HepG2 (cell line): ENCODE measurements at regions of chr15 and their contacts with region 1.

Region 1: DNA sequence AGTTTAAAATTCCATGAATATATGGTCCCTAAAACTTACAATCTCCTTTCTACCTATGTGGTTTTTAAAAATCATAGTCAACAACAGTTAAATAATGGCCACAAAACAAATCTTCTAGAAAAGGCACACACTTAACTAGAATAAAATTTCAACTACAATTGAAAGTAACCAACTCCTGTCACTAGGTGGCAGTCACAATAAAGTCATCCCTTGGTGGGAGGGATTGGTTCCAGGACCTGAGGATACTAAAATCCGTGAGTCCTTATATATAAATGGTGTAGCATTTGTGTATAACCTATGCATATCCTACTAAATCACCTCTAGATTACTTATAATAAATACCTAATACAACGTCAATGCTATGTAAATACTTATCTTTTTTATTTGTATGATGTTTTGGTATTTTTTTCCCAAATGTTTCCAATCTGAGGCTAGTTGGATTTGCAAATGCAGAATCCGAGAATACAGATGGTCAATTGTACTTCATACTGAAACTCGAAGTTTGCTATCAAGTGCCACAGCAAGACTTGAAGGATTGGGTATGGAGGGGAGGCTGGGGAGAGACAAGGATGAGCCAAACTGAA is 172.6 kb downstream of the FMN1 start:
- DNase-seq: peak; percentile 22
- ATAC-seq: peak; percentile 57; the same call in 2 of the 3 replicates
- H3K4me3 ChIP-seq: no peak overlapping the region
- H3K27ac ChIP-seq: no peak overlapping the region
- H3K4me1 ChIP-seq: no peaks in the 10 kb centered on the region
- H3K27me3 ChIP-seq: no peaks in the 10 kb centered on the region
- CTCF ChIP-seq: peak; percentile 65
- EP300 ChIP-seq: no peak
- POLR2A ChIP-seq: no peak
- RAD21 ChIP-seq: no peak

Region 2: DNA sequence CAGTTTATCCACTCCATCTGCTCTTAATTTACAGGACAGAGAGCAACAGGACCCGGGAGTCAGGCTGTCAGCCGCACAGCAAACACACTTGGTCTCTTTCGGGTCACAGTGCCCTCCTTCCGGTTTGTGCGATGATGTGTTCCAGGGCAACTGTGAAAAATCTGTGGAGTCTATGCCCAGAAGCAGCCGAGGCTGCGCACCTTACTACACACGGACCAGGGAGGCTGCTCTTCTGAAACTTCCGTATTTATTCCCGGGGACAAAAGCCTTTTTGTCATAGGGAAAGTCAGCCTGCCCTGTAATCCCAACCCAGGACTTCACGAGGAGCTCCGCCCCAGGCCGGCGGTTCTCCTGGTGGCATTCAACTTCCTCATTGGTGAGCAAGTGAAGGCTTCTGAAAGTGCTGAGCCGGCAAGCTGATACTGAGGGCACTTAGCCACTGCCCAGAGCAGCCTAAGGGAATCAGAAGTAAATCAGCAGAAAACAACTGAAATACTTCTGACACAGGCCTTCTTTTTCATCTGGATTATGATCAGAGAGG is 46.1 kb after region 1 on chr15:
- CTCF ChIA-PET with region 1: no interaction called
- POLR2A ChIA-PET with region 1: no interaction called
- in situ Hi-C with region 1: no loop called
- intact Hi-C with region 1: loop called (anchors 5 kb)
- DNase-seq: peak; percentile 66
- ATAC-seq: peak; percentile 93
- H3K4me3 ChIP-seq: peak overlapping the region; percentile 35 to 65 (median 56)
- H3K27ac ChIP-seq: no peak overlapping the region
- H3K4me1 ChIP-seq: peaks cover 37% of the 10 kb centered on the region
- H3K27me3 ChIP-seq: no peaks in the 10 kb centered on the region; a peak in 1 of 5 replicates
- CTCF ChIP-seq: no peak
- EP300 ChIP-seq: no peak
- POLR2A ChIP-seq: no peak
- RAD21 ChIP-seq: no peak